Thyroid gland (tissue), 4 donors: ENCODE measurements at regions of chr18 and their contacts with region 1.

Region 1: DNA sequence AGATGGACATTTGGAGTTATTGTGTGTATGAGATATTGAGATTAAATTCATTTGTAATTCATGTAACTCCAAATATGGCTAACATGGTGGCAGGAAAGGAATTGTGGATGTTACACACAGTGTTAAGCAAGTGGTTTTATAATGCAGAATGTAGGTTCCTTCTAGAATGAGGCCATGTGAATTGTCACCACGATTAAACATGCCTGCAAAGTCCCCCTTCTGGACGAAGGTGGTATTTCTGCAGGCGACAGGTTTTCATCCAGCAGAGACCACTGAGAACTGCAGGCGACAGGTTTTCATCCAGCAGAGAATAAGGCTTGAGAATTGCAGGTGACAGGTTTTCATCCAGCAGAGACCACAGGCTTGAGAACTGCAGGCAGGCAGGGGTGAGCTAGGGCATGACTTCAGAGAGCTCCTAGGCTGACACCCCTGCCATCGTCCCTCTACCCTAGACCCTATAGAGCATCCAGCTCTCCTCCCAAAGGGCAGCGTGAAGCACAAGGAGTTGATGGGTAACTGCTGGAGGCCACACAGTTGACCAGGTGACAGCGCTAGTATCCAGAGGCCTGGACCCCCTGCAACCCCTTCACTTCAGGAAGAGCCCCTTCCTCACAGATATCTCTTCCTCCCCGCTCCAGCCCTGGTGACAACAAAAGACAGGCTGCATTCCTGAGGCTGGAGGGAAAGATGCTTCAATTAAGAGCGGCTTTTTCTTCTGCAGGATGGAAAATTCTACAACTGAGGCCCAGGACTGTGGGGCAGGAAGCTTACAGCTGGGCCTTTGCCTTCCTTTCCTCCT is 175.8 kb downstream of the LOXHD1 start:
- DNase-seq: peak; percentile 72 to 77
- H3K4me3 ChIP-seq: no peak overlapping the region
- H3K27ac ChIP-seq: no peak overlapping the region
- H3K4me1 ChIP-seq: no peaks in the 10 kb centered on the region
- H3K27me3 ChIP-seq: no peaks in the 10 kb centered on the region
- CTCF ChIP-seq: peak; percentile 66 to 93 (median 80)
- POLR2A ChIP-seq: no peak

Region 2: GRCh38 chr18:46167971-46168370 is 313.3 kb before region 1 on chr18:
- intact Hi-C with region 1: loop called (anchors 10 kb)
- DNase-seq: no peak
- H3K4me3 ChIP-seq: no peak overlapping the region
- H3K27ac ChIP-seq: no peak overlapping the region
- H3K4me1 ChIP-seq: peaks cover 0 to 3% of the 10 kb centered on the region in 2 donors
- H3K27me3 ChIP-seq: no peaks in the 10 kb centered on the region
- CTCF ChIP-seq: no peak
- POLR2A ChIP-seq: no peak

Region 3: DNA sequence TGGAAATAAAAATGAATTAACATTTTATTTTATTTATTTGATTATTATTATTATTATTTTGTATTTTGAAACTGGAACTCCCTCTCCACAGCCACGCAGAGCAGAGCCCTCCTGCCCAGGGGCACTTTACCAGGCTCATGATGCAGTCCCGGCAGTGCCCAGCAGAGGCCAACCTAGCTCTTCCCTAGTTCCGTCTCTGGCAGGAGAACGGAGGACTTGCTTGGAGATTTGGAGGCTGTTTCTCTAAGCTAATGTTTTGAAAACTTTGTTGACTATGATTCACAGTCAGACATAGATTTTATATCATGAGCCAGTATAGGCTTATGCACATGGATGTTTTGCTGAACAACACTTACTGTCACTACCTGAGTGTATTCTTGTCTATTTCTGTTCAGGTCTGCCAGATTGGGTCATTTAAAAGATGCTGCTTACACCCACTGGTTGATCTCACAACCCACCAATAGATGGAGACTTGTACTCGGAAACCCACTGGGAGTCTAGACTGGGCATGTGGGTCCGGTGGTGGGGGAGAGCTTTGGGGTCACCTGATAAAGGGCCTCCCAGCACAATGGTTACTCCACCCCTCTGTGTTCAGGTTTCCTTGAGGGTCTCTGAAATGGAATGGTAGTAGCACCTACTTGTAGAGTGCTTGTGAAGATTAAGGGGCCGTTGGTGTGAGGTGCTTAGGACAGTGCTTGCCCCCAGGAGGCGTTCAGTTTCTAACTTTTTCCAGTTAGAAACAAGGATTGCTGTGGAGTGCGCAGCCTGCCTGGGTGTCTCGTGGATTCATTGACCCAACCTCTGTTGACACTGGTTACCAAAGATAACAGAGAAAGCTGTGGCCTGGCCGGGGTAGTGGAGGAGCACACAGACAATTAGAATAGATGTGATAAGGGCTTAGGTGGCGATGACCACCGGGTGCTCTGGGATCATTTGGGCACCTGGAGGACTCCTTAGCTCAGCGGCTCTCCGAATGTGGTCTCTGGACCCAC is 199.8 kb before region 1 on chr18:
- intact Hi-C with region 1: loop called (anchors 2 kb)
- DNase-seq: peak; percentile 78
- H3K4me3 ChIP-seq: no peak overlapping the region
- H3K27ac ChIP-seq: no peak overlapping the region
- H3K4me1 ChIP-seq: no peaks in the 10 kb centered on the region
- H3K27me3 ChIP-seq: no peaks in the 10 kb centered on the region
- CTCF ChIP-seq: peak; percentile 85 to 94 (median 92)
- POLR2A ChIP-seq: no peak

Region 4: GRCh38 chr18:46657115-46657955 is 176.1 kb after region 1 on chr18 and contains the start of gene LOXHD1:
- intact Hi-C with region 1: loop called (anchors 5 kb)
- DNase-seq: no peak
- H3K4me3 ChIP-seq: no peak within 1 kb of the TSS
- H3K27ac ChIP-seq: no peak within 1 kb of the TSS
- H3K4me1 ChIP-seq: no peaks in the 10 kb centered on the region
- H3K27me3 ChIP-seq: no peaks in the 10 kb centered on the region
- CTCF ChIP-seq: no peak
- POLR2A ChIP-seq: no peak
- total RNA-seq, gene LOXHD1: 0.11 to 0.83 (median 0.32) TPM